Ascending aorta (tissue), 2 donors: ENCODE measurements at regions of chr5 and their contacts with region 1.

Region 1: GRCh38 chr5:177454397-177455035 is 7.9 kb downstream of the PRR7 start:
- DNase-seq: peak; percentile 62 to 97
- H3K4me3 ChIP-seq: peak overlapping the region; percentile 53 to 92
- H3K27ac ChIP-seq: peak overlapping the region; percentile 68 to 86
- H3K4me1 ChIP-seq: peaks cover 18 to 22% of the 10 kb centered on the region in 2 donors
- H3K27me3 ChIP-seq: no peaks in the 10 kb centered on the region
- CTCF ChIP-seq: peak; percentile 96 to 97 (median 96)

Region 2: GRCh38 chr5:177265395-177265794 is 189.1 kb before region 1 on chr5:
- intact Hi-C with region 1: no loop called
- DNase-seq: no peak
- H3K4me3 ChIP-seq: no peak overlapping the region
- H3K27ac ChIP-seq: no peak overlapping the region
- H3K4me1 ChIP-seq: no peaks in the 10 kb centered on the region
- H3K27me3 ChIP-seq: no peaks in the 10 kb centered on the region
- CTCF ChIP-seq: no peak

Region 3: DNA sequence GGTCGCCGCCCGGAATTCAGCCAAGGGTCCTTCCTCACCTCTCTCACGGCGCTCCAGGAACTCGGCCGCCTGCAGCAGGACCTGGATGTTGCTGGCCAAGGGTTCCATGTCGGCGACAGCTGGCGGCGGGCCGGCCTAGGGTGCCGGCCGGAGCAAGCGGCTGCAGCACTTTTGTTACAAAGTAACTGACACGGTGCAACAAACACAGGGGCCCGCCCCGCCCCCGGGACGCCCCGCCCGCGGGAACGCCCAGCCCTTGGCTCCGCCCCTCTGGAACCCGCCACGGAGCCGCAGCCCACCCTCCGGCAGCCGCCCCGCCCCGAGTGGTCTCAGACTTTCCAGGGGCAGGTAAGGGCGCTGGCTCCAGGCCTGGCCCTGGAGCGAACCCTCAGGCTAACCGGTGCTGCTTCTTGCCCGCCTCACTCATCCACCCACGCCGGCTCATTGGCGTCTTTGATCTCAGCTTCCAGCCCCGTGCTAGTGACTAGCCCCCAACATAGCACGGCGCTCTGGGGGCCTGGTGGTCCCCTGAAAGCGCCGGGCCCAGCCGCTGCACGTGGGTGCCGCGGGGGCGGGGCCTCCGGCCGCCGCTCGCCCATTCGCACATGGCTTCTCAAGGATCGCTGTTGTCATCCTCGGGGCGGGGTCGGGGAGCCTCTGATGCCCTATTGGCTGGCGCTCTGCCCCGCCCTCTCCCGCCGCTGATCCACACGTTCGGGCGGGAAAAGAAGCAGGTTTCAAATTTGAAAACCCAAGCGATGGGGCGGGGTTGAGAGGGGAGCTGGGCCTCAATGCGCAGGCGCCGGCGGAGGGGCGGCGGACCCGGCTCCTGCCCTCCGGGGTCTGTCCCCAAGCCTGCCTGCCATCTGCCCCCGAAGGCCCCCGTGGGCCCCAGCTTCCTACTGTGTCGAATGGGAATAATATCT is 142.5 kb before region 1 on chr5 and contains the start of gene MXD3:
- intact Hi-C with region 1: loop called (anchors 5 kb)
- DNase-seq: peak; percentile 88 to 98
- H3K4me3 ChIP-seq: peak within 1 kb of the TSS; percentile 57 to 66
- H3K27ac ChIP-seq: no peak within 1 kb of the TSS
- H3K4me1 ChIP-seq: peaks cover 12 to 18% of the 10 kb centered on the region in 2 donors
- H3K27me3 ChIP-seq: no peaks in the 10 kb centered on the region
- CTCF ChIP-seq: no peak
- total RNA-seq, gene MXD3: 13.5 TPM

Region 4: GRCh38 chr5:177390363-177391300 is 63.9 kb before region 1 on chr5:
- intact Hi-C with region 1: loop called (anchors 1 kb)
- DNase-seq: peak in 1 of 2 donors; percentile 89
- H3K4me3 ChIP-seq: no peak overlapping the region
- H3K27ac ChIP-seq: no peak overlapping the region
- H3K4me1 ChIP-seq: no peaks in the 10 kb centered on the region
- H3K27me3 ChIP-seq: no peaks in the 10 kb centered on the region
- CTCF ChIP-seq: peak; percentile 94 to 95 (median 94)

Region 5: DNA sequence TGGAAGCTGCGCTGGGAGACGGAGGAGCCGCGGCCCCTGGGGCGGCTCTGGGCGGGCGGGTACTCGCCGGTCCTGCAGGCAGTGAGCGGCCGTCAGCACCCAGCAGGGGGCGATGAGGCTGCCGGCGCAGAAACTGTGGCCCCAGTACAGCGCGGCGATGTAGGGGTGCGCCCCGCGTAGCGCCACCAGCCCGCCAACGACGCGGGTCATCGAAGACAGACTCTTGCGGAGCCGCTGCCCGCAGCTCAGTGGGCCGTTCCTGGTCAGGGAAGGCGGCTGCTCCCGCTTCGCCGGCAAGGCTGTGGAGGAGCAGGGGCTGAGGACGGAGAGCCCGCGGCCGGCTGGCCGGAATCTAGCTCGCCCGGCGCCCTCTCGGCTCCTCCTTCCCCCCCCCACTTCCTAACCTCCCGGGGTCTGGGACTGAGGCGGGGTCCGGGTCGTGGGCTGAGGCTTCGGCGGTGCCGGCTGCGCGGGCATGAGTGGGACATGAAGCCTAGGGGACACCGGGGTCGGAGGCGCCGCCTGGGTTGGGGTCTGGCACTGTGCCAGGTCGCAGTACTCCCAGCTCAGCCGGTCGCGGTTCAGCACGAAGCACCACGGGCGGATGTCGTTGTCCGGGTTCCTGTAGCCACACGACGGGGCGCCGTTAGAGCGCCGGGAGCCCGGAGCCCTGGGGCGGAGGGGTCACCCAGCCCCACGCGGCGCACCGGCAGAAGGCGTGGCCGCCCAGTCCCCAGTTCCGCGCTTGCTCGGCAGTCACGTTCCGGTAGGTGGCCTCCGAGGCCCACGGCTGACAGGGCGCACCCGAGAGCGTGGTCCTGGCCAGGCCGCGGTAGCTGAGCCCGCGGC is 50.5 kb before region 1 on chr5:
- intact Hi-C with region 1: loop called (anchors 1 kb)
- DNase-seq: peak in 1 of 2 donors; percentile 89
- H3K4me3 ChIP-seq: peak overlapping the region; percentile 52 to 85
- H3K27ac ChIP-seq: no peak overlapping the region
- H3K4me1 ChIP-seq: peaks cover 17 to 24% of the 10 kb centered on the region in 2 donors
- H3K27me3 ChIP-seq: peaks cover 41% of the 10 kb centered on the region
- CTCF ChIP-seq: peak; percentile 75 to 87 (median 79)

Region 6: GRCh38 chr5:177473461-177474001 is 19.0 kb after region 1 on chr5 and contains the start of gene DBN1:
- intact Hi-C with region 1: loop called (anchors 1 kb)
- DNase-seq: no peak
- H3K4me3 ChIP-seq: peak within 1 kb of the TSS; percentile 91 to 94
- H3K27ac ChIP-seq: peak within 1 kb of the TSS; percentile 91
- H3K4me1 ChIP-seq: peaks cover 26 to 77% of the 10 kb centered on the region in 2 donors
- H3K27me3 ChIP-seq: no peaks in the 10 kb centered on the region
- CTCF ChIP-seq: no peak
- total RNA-seq, gene DBN1: 151 TPM

Region 7: GRCh38 chr5:177504086-177505056 is 49.9 kb after region 1 on chr5:
- intact Hi-C with region 1: no loop called
- DNase-seq: no peak
- H3K4me3 ChIP-seq: no peak overlapping the region
- H3K27ac ChIP-seq: no peak overlapping the region
- H3K4me1 ChIP-seq: no peaks in the 10 kb centered on the region
- H3K27me3 ChIP-seq: no peaks in the 10 kb centered on the region
- CTCF ChIP-seq: no peak